HCT116 (cell line): ENCODE measurements at regions of chr15 and their contacts with region 1.

Region 1: GRCh38 chr15:56285981-56286612 is 42.4 kb upstream of the RFX7 start:
- DNase-seq: peak; percentile 6
- ATAC-seq: peak; percentile 59; the same call in 1 of the 2 replicates
- H3K4me3 ChIP-seq: no peak overlapping the region
- H3K27ac ChIP-seq: no peak overlapping the region
- H3K4me1 ChIP-seq: no peaks in the 10 kb centered on the region
- H3K27me3 ChIP-seq: no peaks in the 10 kb centered on the region
- CTCF ChIP-seq: peak in 2 of 3 experiments; percentile 60 to 67; a peak in 4 of 6 replicates
- POLR2A ChIP-seq: no peak
- RAD21 ChIP-seq: no peak

Region 2: DNA sequence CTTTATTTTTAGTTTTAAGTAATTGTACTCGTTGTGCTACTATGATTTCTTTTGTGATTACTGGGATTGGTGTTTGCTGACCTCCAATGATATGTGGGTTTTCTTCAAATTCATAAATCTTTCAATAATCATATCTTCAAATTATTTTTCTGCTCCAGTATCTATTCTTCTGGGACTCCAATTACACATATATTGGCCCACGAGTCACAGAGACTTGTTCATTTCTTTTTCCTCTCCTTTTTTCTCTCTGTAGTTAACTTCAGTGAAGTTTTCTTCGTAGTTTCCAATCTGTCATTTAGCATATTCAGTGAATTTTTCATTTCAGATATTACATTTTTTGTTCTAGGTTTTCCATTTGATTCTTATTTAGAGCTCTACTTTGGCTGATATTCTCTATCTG is 63.8 kb before region 1 on chr15:
- CTCF ChIA-PET with region 1: no interaction called
- POLR2A ChIA-PET with region 1: no interaction called
- RAD21 ChIA-PET with region 1: no interaction called
- intact Hi-C with region 1: loop called (anchors 10 kb)
- DNase-seq: no peak
- ATAC-seq: no peak
- H3K4me3 ChIP-seq: no peak overlapping the region
- H3K27ac ChIP-seq: no peak overlapping the region
- H3K4me1 ChIP-seq: no peaks in the 10 kb centered on the region
- H3K27me3 ChIP-seq: no peaks in the 10 kb centered on the region
- CTCF ChIP-seq: no peak
- POLR2A ChIP-seq: no peak
- RAD21 ChIP-seq: no peak